Dorsolateral prefrontal cortex (tissue), 120 donors: ENCODE measurements at regions of chr12 and their contacts with region 1.

Region 1: DNA sequence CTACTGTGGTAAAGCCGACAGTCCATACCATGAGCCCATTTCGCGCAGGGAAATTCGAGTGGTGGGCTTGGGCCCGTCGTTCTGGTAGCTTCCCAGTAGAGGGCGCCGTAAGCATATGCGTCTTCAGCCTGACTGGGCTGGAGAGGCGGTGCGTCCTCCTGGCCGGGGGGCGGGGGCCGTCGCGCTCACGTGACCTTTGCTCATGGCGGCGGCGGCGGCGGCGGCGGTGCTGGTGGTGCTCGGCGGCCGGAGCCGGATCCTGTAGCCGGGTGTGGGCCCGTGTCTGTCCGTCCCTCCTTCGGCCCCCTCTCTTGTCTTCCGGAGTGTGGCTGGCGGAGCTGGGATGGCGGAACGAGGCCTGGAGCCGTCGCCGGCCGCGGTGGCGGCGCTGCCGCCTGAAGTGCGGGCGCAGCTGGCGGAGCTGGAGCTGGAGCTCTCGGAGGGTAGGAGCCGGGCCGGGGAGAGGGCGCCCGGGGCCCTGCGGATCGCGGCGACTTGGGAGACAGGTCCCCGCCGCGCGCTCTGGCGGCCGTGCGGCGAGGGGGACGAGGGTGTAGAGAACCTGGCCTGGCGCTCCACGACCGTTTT is at the start of gene DIP2B:
- DNase-seq: peak; percentile 92 to 96 (median 94)
- H3K4me3 ChIP-seq: peak within 1 kb of the TSS; percentile 65 to 97 (median 90)
- H3K27ac ChIP-seq: peak within 1 kb of the TSS; percentile 89 to 100 (median 99)
- H3K27me3 ChIP-seq: no peaks in the 10 kb centered on the region
- CTCF ChIP-seq: peak; percentile 26 to 99 (median 97)
- total RNA-seq, gene DIP2B: 46.7 to 192 (median 81.6) TPM

Region 2: DNA sequence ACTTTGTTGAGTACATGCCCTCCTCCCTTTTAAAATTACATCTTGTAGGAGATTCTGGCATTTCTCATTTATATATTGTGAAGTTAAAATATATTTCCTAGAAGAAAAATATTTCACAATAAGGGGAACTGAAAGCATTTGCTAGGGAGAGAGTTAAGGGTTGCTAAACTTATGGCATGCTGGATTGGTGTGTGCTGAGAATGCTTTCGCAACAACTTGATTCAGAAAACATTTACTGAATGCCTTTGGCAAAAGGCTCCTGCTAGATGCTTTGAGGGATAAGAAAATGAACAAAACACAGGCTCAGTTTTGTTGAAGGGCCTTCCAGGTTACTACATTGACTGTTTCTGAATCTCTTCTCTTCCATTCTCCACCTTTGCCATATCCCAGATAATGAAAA is 67.4 kb after region 1 on chr12:
- intact Hi-C with region 1: loop called (anchors 5 to 10 kb)
- DNase-seq: no peak
- H3K4me3 ChIP-seq: no peak overlapping the region
- H3K27ac ChIP-seq: peak overlapping the region in 54 of 59 donors; percentile 2 to 86 (median 68)
- H3K27me3 ChIP-seq: no peaks in the 10 kb centered on the region
- CTCF ChIP-seq: no peak

Region 3: GRCh38 chr12:50637870-50638481 is 133.1 kb after region 1 on chr12:
- intact Hi-C with region 1: loop called (anchors 2 kb)
- DNase-seq: no peak
- H3K4me3 ChIP-seq: peak overlapping the region in 5 of 59 donors; percentile 3 to 31 (median 5)
- H3K27ac ChIP-seq: peak overlapping the region in 56 of 59 donors; percentile 13 to 91 (median 78)
- H3K27me3 ChIP-seq: no peaks in the 10 kb centered on the region
- CTCF ChIP-seq: peak; percentile 63 to 88 (median 76)

Region 4: DNA sequence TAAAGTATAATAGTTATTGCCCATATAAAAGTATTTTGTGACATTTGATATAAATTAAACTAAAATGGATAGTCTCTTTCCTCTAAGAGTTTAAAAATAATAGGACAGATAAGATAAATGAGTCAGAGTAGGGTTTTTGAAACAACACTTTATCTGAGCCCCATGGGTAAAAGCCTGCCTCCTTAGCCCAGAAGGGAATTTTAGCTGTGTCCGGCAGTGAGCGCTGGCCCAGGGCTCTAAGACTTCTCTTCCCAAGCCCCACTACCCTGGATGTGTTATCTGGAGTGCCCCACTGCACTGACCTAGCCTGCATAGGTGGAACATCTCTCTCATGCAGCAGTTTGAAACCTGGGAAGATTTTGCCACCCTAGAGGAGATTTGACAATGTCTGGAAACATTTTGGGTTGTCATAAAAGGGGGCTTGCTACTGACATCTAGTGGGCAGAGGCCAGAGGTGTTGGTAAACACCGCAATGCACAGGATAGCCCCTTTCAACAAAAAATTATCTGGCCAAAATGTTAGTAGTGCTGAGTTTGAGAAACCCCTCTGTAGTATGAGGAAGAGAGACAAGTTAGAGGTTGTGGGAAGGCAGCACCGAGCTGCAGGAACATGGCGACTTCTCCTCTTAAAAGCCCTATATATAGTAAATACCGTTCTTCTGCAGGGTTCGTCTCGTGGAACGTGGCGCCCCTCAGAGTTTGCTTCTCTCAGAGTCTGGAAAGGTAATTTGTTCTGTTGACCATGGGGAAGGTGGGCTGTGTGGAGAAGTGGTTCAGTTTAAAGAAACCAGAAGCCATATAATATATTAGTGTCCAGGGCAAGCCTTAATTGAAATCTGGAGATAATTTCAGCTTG is 229.7 kb after region 1 on chr12:
- intact Hi-C with region 1: loop called (anchors 2 to 5 kb)
- DNase-seq: peak in 2 of 10 donors; percentile 29 to 59
- H3K4me3 ChIP-seq: peak overlapping the region in 4 of 59 donors; percentile 4 to 32 (median 18)
- H3K27ac ChIP-seq: peak overlapping the region in 46 of 59 donors; percentile 2 to 79 (median 56)
- H3K27me3 ChIP-seq: no peaks in the 10 kb centered on the region
- CTCF ChIP-seq: peak in 55 of 56 donors; percentile 40 to 81 (median 66)